H1 (cell line): ENCODE measurements at regions of chr16 and their contacts with region 1.

Region 1: GRCh38 chr16:30724641-30725417 is 23.4 kb upstream of the PHKG2 start:
- DNase-seq: no peak
- H3K4me3 ChIP-seq: no peak overlapping the region
- H3K27ac ChIP-seq: no peak overlapping the region
- H3K4me1 ChIP-seq: peaks cover 0 to 3% (median 3%) of the 10 kb centered on the region in 4 experiments; a peak in 2 of 7 replicates
- H3K27me3 ChIP-seq: no peaks in the 10 kb centered on the region
- CTCF ChIP-seq: no peak
- EP300 ChIP-seq: no peak
- POLR2A ChIP-seq: no peak
- RAD21 ChIP-seq: no peak

Region 2: DNA sequence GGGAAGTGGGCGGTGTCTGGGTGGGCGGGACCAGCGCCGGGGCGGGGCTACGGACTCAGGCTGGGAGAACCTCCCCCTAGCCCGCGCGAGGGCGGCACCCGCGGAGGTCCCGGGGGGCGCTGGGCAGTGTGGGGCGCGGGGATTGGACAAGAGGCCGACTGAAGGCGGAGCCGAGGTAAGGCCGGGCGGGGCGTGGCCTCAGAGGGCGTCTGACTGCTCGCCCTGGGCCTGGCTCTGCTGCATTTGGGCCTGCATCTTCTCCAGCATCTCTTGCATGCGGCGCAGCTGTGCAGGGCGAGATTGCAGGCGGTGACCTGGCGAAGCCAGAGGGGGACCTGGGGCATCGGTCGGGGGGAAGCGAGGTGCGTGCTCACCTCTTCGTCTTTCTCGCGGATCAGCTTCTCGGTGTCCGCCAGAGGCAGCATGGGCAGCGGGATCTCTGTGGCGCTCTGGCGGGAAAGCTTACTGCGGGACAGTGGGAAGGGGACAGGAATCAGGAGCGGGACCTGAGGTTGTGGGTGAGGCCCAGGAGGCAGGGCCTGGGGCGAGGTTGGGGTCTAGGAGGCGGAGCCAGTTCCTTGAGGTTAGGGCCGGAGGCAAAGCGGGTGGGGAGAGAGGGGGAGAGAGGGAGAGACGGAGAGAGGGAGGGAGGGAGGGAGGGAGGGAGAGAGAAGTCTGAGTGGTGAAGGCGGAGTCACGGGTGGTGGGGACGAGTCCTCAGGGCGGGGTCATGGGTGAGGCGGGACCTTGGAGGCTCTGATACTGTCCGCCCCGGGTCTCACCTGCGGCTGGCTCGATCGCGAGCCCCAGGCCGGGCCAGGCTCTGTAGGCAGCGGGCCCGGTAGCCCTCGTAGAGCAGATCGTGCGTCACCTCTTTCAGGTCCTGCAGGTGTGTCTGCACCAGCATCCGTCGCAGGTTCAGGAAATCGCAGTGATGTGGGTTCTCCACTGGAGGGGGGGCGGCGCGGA is 346.3 kb before region 1 on chr16:
- CTCF ChIA-PET with region 1: no interaction called
- POLR2A ChIA-PET with region 1: no interaction called
- DNase-seq: peak; percentile 92 to 99
- H3K4me3 ChIP-seq: peak overlapping the region; percentile 70 to 88 (median 82)
- H3K27ac ChIP-seq: peak overlapping the region; percentile 92
- H3K4me1 ChIP-seq: peaks cover 0 to 9% (median 5%) of the 10 kb centered on the region in 4 experiments; a peak in 5 of 7 replicates
- H3K27me3 ChIP-seq: no peaks in the 10 kb centered on the region
- CTCF ChIP-seq: no peak
- EP300 ChIP-seq: no peak
- POLR2A ChIP-seq: peak; percentile 29 to 64; a peak in 2 of 3 replicates
- RAD21 ChIP-seq: no peak

Region 3: DNA sequence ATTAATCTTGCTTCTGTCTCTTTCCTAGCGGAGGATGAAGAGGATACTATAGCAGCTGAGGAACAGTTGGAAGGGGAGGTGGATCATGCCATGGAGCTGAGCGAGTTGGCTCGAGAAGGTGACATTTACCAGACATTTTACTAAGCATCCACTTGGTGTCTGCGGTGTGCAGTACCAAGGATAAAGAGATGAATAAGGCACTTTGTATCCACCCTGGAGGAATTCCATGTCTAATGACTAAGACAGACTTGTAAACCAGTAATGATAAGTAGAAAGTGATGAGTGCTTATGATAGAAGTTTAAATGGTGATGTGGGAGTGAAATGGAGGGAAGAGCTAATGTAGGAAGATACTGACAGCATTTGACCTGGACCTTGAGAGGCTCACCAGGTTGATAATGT is 13.9 kb before region 1 on chr16:
- CTCF ChIA-PET with region 1: no interaction called
- POLR2A ChIA-PET with region 1: interaction called, 80 read pairs
- DNase-seq: no peak
- H3K4me3 ChIP-seq: no peak overlapping the region
- H3K27ac ChIP-seq: no peak overlapping the region
- H3K4me1 ChIP-seq: no peaks in the 10 kb centered on the region
- H3K27me3 ChIP-seq: no peaks in the 10 kb centered on the region
- CTCF ChIP-seq: no peak
- EP300 ChIP-seq: no peak
- POLR2A ChIP-seq: no peak
- RAD21 ChIP-seq: no peak

Region 4: GRCh38 chr16:30736996-30737793 is 12.4 kb after region 1 on chr16:
- CTCF ChIA-PET with region 1: interaction called, 8 read pairs
- POLR2A ChIA-PET with region 1: interaction called, 21 read pairs
- DNase-seq: no peak
- H3K4me3 ChIP-seq: no peak overlapping the region
- H3K27ac ChIP-seq: no peak overlapping the region
- H3K4me1 ChIP-seq: peaks cover 0 to 7% (median 2%) of the 10 kb centered on the region in 4 experiments; a peak in 5 of 7 replicates
- H3K27me3 ChIP-seq: no peaks in the 10 kb centered on the region; a peak in 1 of 7 replicates
- CTCF ChIP-seq: no peak
- EP300 ChIP-seq: no peak
- POLR2A ChIP-seq: no peak
- RAD21 ChIP-seq: no peak

Region 5: GRCh38 chr16:30813821-30814189 is 89.0 kb after region 1 on chr16:
- CTCF ChIA-PET with region 1: no interaction called
- POLR2A ChIA-PET with region 1: no interaction called
- DNase-seq: no peak
- H3K4me3 ChIP-seq: peak overlapping the region; percentile 21 to 55 (median 29); a peak in 5 of 8 replicates
- H3K27ac ChIP-seq: no peak overlapping the region
- H3K4me1 ChIP-seq: no peaks in the 10 kb centered on the region; a peak in 4 of 7 replicates
- H3K27me3 ChIP-seq: peaks cover 0 to 5% (median 2%) of the 10 kb centered on the region in 4 experiments; a peak in 1 of 7 replicates
- CTCF ChIP-seq: no peak
- EP300 ChIP-seq: no peak
- POLR2A ChIP-seq: no peak
- RAD21 ChIP-seq: no peak